Left lung (tissue), 14 donors: ENCODE measurements at regions of chr14 and their contacts with region 1.

Region 1: GRCh38 chr14:22854963-22855724 is 16.4 kb upstream of the LRP10 start:
- DNase-seq: no peak
- ATAC-seq: no peak
- H3K4me3 ChIP-seq: no peak overlapping the region
- H3K27ac ChIP-seq: no peak overlapping the region
- H3K4me1 ChIP-seq: peaks cover 18 to 32% of the 10 kb centered on the region in 2 donors
- H3K27me3 ChIP-seq: peaks cover 0 to 4% of the 10 kb centered on the region in 2 donors
- CTCF ChIP-seq: no peak

Region 2: GRCh38 chr14:22822571-22823098 is 32.5 kb before region 1 on chr14:
- intact Hi-C with region 1: loop called in 1 of 2 experiments (anchors 5 kb)
- DNase-seq: peak; percentile 81 to 93 (median 88)
- ATAC-seq: peak; percentile 75
- H3K4me3 ChIP-seq: peak overlapping the region; percentile 6 to 51
- H3K27ac ChIP-seq: peak overlapping the region; percentile 33 to 80
- H3K4me1 ChIP-seq: peaks cover 15 to 60% of the 10 kb centered on the region in 2 donors
- H3K27me3 ChIP-seq: no peaks in the 10 kb centered on the region
- CTCF ChIP-seq: peak; percentile 73 to 86